ENCODE measurements at regions of chr4 and their contacts with region 1.

Region 1: GRCh38 chr4:140012688-140013486 is 141.1 kb downstream of the MAML3 start:
- DNase-seq: peak; percentile 18 to 78 (median 51)
- ATAC-seq: peak; percentile 61 to 97 (median 80)
- H3K4me3 ChIP-seq: no peak overlapping the region
- H3K4me3 Mint-ChIP-seq: no peak overlapping the region
- H3K27ac ChIP-seq: no peak overlapping the region
- H3K27ac Mint-ChIP-seq: no peak overlapping the region
- H3K4me1 ChIP-seq: no peaks in the 10 kb centered on the region
- H3K4me1 Mint-ChIP-seq: peaks cover 6 to 9% (median 7%) of the 10 kb centered on the region in 3 donors
- H3K27me3 ChIP-seq: no peaks in the 10 kb centered on the region
- H3K27me3 Mint-ChIP-seq: peaks cover 0 to 10% of the 10 kb centered on the region in 2 donors

Region 2: DNA sequence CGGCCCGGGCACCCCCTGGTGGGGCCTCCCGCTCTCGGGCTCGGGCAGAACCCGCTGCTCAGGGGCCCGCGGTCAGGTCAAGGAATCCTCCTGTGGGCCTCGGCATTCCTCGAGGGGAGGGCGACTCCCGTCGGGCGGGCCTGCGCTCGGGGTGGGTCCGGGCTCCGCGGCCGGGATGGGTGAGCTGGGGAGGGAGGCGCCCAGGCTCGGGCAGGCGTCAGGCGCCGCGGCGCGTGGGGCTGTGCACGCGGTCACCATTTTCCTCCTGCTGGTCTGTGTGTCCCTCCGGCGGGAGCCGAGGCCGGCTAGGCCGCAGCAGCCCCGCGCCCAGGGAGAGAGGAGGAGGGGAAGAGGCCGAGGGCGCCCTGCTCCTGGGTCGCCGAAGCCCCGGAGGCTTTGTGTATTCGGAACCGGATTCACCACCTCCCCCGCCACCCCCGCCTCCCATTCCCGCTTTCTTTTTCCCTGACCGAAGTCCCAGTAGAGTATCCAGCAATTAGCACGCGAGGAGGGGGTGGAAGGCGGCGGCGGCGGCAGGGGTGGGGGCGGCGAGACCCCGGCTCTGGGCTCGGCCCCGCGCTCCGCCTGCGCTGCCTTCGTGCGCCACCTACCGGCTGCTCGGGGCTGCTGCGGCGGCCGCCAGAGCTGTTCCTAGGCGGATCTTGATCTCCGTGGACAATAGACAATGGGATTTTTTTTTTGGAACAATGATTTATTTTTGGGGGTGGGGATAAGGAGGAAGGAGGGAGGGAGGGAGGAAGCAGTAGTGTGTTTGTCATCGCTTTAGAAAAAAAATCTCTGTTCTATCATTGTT is 240.1 kb after region 1 on chr4:
- CTCF ChIA-PET with region 1: interaction called, 19 to 32 read pairs
- POLR2A ChIA-PET with region 1: no interaction called
- DNase-seq: peak in 33 of 35 experiments; percentile 10 to 77 (median 48)
- ATAC-seq: peak; percentile 82 to 88 (median 86)
- H3K4me3 ChIP-seq: peak overlapping the region; percentile 57 to 66
- H3K4me3 Mint-ChIP-seq: peak overlapping the region; percentile 68 to 78 (median 77)
- H3K27ac ChIP-seq: no peak overlapping the region
- H3K27ac Mint-ChIP-seq: no peak overlapping the region
- H3K4me1 ChIP-seq: peaks cover 8 to 9% of the 10 kb centered on the region in 2 experiments
- H3K4me1 Mint-ChIP-seq: peaks cover 4 to 12% (median 5%) of the 10 kb centered on the region in 3 donors
- H3K27me3 ChIP-seq: peaks cover 0 to 13% of the 10 kb centered on the region in 2 experiments
- H3K27me3 Mint-ChIP-seq: peaks cover 5 to 18% of the 10 kb centered on the region in 2 donors

Region 3: DNA sequence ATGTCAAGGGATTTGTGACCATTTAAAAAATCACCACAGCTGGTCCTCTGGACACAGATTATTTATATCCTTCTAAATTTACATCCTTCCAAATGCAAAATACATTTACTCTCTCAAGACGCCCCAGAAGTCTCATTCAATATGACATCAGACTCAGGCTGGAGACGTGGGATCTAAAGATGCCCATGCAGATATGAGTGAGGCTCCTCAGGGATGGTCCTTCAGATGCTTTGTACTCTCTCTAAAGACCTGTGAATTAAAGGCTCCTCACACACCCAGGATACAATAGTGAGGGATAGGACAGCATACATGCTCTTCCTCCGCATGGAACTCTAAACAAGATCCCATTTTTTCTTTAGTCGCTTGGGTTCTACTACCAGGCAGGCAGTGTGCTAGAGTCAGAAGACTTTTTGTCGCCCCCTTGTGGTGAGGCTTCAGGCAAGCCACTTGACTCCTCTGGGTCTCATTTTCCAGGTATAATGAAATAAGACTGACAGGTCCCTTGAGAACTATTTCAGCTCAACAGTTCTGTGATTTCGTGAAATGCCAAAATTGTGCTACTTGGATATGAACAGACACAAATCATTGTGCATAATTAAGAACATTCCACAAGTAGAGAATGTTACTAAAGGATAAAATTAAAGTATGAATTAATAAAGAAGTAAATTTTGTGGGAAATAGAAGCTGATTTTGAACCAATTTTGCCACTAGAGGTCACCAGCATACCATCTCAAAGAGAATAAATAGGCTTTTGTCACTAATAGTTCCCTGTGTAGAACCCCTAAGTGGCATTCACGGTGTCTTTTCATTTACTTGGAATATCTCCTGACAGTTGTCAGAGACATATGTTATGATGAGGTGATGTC is 346.9 kb after region 1 on chr4:
- CTCF ChIA-PET with region 1: interaction called, 4 to 19 read pairs
- POLR2A ChIA-PET with region 1: no interaction called
- DNase-seq: peak; percentile 34 to 87 (median 66)
- ATAC-seq: peak; percentile 83 to 97 (median 90)
- H3K4me3 ChIP-seq: no peak overlapping the region
- H3K4me3 Mint-ChIP-seq: no peak overlapping the region
- H3K27ac ChIP-seq: no peak overlapping the region
- H3K27ac Mint-ChIP-seq: no peak overlapping the region
- H3K4me1 ChIP-seq: no peaks in the 10 kb centered on the region
- H3K4me1 Mint-ChIP-seq: peaks cover 4 to 5% (median 4%) of the 10 kb centered on the region in 3 donors
- H3K27me3 ChIP-seq: peaks cover 0 to 3% of the 10 kb centered on the region in 2 experiments
- H3K27me3 Mint-ChIP-seq: no peaks in the 10 kb centered on the region

Measured in T-cell (primary cell).